SK-N-SH (cell line): ENCODE measurements at regions of chr3 and their contacts with region 1.

Region 1: DNA sequence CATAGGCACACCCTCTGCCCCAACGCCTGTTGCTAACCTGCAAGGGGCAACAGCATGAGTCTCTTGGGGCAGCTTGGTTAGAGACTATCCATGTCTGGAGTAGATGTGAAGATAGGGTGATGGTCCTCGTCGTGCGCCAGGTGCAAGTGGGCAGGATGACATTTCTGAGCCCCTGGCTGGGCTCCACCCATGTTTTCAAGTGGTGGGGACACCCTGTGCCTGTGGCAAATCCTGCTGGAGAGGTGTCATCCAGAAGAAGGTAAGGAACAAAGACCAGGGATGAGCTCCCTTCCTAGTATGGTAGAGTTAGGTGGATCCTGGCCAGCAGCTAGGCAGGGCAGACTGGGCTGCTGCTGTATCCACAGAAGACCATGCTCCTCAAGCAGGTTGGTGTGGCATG is 152.6 kb downstream of the ABHD5 start:
- DNase-seq: no peak
- H3K4me3 ChIP-seq: no peak overlapping the region
- H3K27ac ChIP-seq: no peak overlapping the region
- H3K4me1 ChIP-seq: no peaks in the 10 kb centered on the region
- H3K27me3 ChIP-seq: no peaks in the 10 kb centered on the region
- CTCF ChIP-seq: no peak
- EP300 ChIP-seq: no peak
- RAD21 ChIP-seq: no peak

Region 2: GRCh38 chr3:43855674-43856299 is 12.4 kb after region 1 on chr3:
- CTCF ChIA-PET with region 1: interaction called, 11 read pairs
- POLR2A ChIA-PET with region 1: no interaction called
- DNase-seq: peak; percentile 58
- H3K4me3 ChIP-seq: peak overlapping the region in 1 of 2 experiments; percentile 11; a peak in 1 of 4 replicates
- H3K27ac ChIP-seq: no peak overlapping the region
- H3K4me1 ChIP-seq: peaks cover 20 to 22% of the 10 kb centered on the region in 2 experiments; a peak in 3 of 4 replicates
- H3K27me3 ChIP-seq: no peaks in the 10 kb centered on the region
- CTCF ChIP-seq: peak; percentile 71
- EP300 ChIP-seq: no peak
- RAD21 ChIP-seq: peak; percentile 74